ENCODE measurements at regions of chr1 and their contacts with region 1.

Region 1: GRCh38 chr1:248837794-248838356 is at the start of gene ZNF672:
- DNase-seq: peak; percentile 93 to 99 (median 96)
- ATAC-seq: peak; percentile 88
- H3K4me3 ChIP-seq: peak within 1 kb of the TSS; percentile 81
- H3K27ac ChIP-seq: peak within 1 kb of the TSS; percentile 92
- H3K4me1 ChIP-seq: peaks cover 40 to 47% of the 10 kb centered on the region in 2 experiments
- H3K27me3 ChIP-seq: no peaks in the 10 kb centered on the region
- CTCF ChIP-seq: no peak
- EP300 ChIP-seq: peak; percentile 7; the same call in 1 of the 2 replicates
- POLR2A ChIP-seq: peak; percentile 57; the same call in 1 of the 2 replicates
- RAD21 ChIP-seq: no peak
- polyA plus RNA-seq, gene ZNF672: 1.9 to 3.1 TPM

Region 2: DNA sequence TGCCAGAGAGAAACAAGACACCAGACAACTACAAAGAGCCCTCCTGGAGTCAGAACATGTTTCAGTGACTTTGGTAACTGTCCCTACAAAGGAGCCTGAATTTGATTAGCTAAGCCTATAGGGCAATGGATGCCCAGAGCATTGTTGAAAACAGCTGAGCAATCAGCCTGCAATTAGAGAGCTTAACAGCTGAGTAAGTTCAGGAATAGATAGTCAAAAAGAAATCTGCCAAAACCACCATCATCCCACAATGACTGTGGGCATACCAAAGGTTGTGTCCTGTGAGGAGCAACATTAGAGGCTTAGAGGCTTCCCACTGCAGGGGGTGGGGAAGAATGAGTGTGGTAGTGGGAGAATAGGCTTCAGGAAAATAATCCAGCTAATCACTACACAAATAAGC is 44.3 kb before region 1 on chr1:
- CTCF ChIA-PET with region 1: no interaction called
- POLR2A ChIA-PET with region 1: no interaction called
- in situ Hi-C with region 1: no loop called
- intact Hi-C with region 1: no loop called
- DNase-seq: no peak
- ATAC-seq: no peak
- H3K4me3 ChIP-seq: no peak overlapping the region
- H3K27ac ChIP-seq: no peak overlapping the region
- H3K4me1 ChIP-seq: no peaks in the 10 kb centered on the region
- H3K27me3 ChIP-seq: no peaks in the 10 kb centered on the region; a peak in 1 of 5 replicates
- CTCF ChIP-seq: no peak
- EP300 ChIP-seq: no peak
- POLR2A ChIP-seq: no peak
- RAD21 ChIP-seq: no peak

Region 3: DNA sequence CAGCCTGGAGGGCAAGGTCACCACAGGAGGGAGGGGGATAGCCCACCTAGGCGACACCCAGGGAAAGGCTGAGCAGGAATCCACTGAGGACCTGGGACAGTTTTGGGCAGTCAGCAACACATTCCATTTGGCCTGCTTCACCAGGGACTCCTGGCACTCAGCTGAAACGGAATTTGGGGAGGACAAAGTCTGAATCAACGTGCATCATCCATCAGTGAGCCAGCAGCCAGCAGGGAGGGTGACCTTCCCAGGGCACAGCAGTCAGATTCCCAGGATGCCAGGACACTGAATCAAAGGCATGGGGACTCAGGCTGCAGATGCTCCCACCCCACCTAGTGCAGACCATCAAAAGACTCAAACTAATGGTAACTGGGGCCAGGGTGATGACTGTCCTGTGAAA is 16.8 kb before region 1 on chr1:
- CTCF ChIA-PET with region 1: no interaction called
- POLR2A ChIA-PET with region 1: interaction called, 78 read pairs
- in situ Hi-C with region 1: no loop called
- intact Hi-C with region 1: loop called (anchors 1 kb)
- DNase-seq: peak in 1 of 4 experiments; percentile 2
- ATAC-seq: no peak
- H3K4me3 ChIP-seq: no peak overlapping the region
- H3K27ac ChIP-seq: no peak overlapping the region
- H3K4me1 ChIP-seq: peaks cover 9 to 22% of the 10 kb centered on the region in 2 experiments; a peak in 4 of 5 replicates
- H3K27me3 ChIP-seq: no peaks in the 10 kb centered on the region
- CTCF ChIP-seq: no peak
- EP300 ChIP-seq: no peak
- POLR2A ChIP-seq: no peak
- RAD21 ChIP-seq: no peak

Region 4: GRCh38 chr1:248850536-248851439 is 12.9 kb after region 1 on chr1:
- CTCF ChIA-PET with region 1: no interaction called
- POLR2A ChIA-PET with region 1: interaction called, 14 read pairs
- in situ Hi-C with region 1: no loop called
- intact Hi-C with region 1: no loop called
- DNase-seq: no peak
- ATAC-seq: peak; percentile 18
- H3K4me3 ChIP-seq: no peak overlapping the region
- H3K27ac ChIP-seq: no peak overlapping the region; the same call in 2 of the 3 replicates
- H3K4me1 ChIP-seq: peaks cover 14 to 31% of the 10 kb centered on the region in 2 experiments; a peak in 4 of 5 replicates
- H3K27me3 ChIP-seq: no peaks in the 10 kb centered on the region
- CTCF ChIP-seq: no peak; a peak in 1 of 6 replicates
- EP300 ChIP-seq: no peak
- POLR2A ChIP-seq: no peak; the same call in 1 of the 2 replicates
- RAD21 ChIP-seq: no peak

Region 5: DNA sequence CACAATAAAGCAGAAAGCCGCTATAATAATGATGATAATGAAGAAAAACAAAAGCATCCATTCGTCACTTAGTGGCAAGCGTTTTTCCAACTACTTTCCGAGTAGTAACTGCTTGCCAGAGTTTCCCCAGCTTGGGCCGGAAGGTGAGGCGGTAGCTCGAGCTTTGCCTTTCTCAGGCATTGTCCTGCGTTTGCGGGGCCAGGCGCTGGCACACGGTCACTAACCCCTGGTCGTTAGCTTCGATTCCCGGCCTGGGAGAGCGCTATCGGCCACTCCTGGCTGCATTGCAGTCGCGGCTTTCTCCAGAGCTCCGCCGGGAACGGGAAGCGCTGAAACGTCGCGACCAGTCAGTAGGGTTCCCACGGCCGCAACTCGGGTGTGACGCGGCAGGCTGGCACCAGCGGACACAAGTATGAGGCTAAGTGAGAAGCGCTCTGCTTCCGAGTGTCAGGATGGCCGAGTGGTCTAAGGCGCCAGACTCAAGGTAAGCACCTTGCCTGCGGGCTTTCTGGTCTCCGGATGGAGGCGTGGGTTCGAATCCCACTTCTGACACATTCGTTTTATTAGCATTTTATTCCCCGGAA is 35.6 kb after region 1 on chr1:
- CTCF ChIA-PET with region 1: no interaction called
- POLR2A ChIA-PET with region 1: interaction called, 14 read pairs
- in situ Hi-C with region 1: no loop called
- intact Hi-C with region 1: loop called (anchors 1 kb)
- DNase-seq: peak; percentile 84 to 97 (median 84)
- ATAC-seq: peak; percentile 82
- H3K4me3 ChIP-seq: peak overlapping the region; percentile 79
- H3K27ac ChIP-seq: peak overlapping the region; percentile 98
- H3K4me1 ChIP-seq: peaks cover 16 to 21% of the 10 kb centered on the region in 2 experiments
- H3K27me3 ChIP-seq: no peaks in the 10 kb centered on the region
- CTCF ChIP-seq: peak in 1 of 3 experiments; percentile 4; a peak in 2 of 6 replicates
- EP300 ChIP-seq: peak; percentile 73
- POLR2A ChIP-seq: peak; percentile 82
- RAD21 ChIP-seq: no peak

Region 6: GRCh38 chr1:248906009-248906752 is 68.3 kb after region 1 on chr1 and contains the start of gene PGBD2:
- CTCF ChIA-PET with region 1: interaction called, 3 read pairs
- POLR2A ChIA-PET with region 1: interaction called, 7 read pairs
- in situ Hi-C with region 1: no loop called
- intact Hi-C with region 1: loop called (anchors 1 kb)
- DNase-seq: peak; percentile 98 to 99 (median 98)
- ATAC-seq: peak; percentile 93
- H3K4me3 ChIP-seq: peak within 1 kb of the TSS; percentile 58
- H3K27ac ChIP-seq: peak within 1 kb of the TSS; percentile 99
- H3K4me1 ChIP-seq: peaks cover 22 to 46% of the 10 kb centered on the region in 2 experiments; a peak in 4 of 5 replicates
- H3K27me3 ChIP-seq: no peaks in the 10 kb centered on the region
- CTCF ChIP-seq: peak; percentile 72 to 94 (median 79)
- EP300 ChIP-seq: peak; percentile 31
- POLR2A ChIP-seq: peak; percentile 94
- RAD21 ChIP-seq: peak; percentile 79 to 88
- polyA plus RNA-seq, gene PGBD2: 14.7 to 21.8 TPM

Measured in K562 (cell line).